ENCODE measurements at regions of chr10 and their contacts with region 1.

Region 1: GRCh38 chr10:21265621-21266020 is 259.9 kb downstream of the SKIDA1 start:
- DNase-seq: no peak
- ATAC-seq: no peak
- H3K4me3 ChIP-seq: no peak overlapping the region
- H3K27ac ChIP-seq: no peak overlapping the region
- H3K4me1 ChIP-seq: no peaks in the 10 kb centered on the region
- H3K27me3 ChIP-seq: no peaks in the 10 kb centered on the region
- CTCF ChIP-seq: no peak
- POLR2A ChIP-seq: no peak

Region 2: DNA sequence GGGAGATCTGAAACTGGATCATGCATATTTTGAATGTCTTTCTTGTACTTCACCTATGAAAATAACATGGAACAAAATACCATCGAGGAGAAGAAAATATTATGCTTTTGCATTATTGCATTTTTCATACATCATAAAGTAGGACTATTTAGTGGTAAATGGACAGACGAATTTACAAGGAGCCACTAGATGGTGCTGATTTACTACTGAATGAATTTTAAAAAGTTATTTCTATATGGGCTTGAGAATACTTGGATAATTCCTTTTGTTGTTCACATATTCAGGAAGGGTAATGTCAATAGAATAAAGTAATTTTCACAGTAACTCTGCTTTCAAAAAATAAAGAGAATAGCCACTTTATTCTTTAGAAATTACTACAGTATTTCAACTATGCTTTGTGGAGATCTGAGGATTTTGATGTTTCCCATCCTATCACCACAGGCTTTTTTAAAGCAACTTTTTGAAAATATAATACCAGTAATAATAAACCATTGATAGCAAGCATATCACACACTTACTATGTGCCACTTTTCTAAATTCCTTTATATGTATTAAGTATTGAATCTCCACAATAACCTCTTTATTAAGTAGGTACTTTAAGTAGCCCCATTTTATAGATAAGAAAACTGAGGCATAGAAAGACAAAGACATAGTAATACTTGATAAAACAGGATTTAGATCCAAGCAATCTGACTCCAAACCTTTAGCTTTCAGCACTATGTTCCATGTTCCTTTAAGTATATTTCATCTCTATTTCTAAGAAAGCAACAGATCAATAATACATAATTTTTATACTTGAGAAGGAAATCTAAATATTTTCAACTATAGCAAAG is 407.1 kb before region 1 on chr10:
- intact Hi-C with region 1: loop called (anchors 5 kb)
- DNase-seq: no peak
- ATAC-seq: no peak
- H3K4me3 ChIP-seq: no peak overlapping the region
- H3K27ac ChIP-seq: no peak overlapping the region
- H3K4me1 ChIP-seq: no peaks in the 10 kb centered on the region
- H3K27me3 ChIP-seq: no peaks in the 10 kb centered on the region
- CTCF ChIP-seq: peak; percentile 11 to 59 (median 45)
- POLR2A ChIP-seq: no peak

Region 3: GRCh38 chr10:21083871-21084295 is 181.7 kb before region 1 on chr10:
- intact Hi-C with region 1: loop called (anchors 5 kb)
- DNase-seq: no peak
- ATAC-seq: no peak
- H3K4me3 ChIP-seq: no peak overlapping the region
- H3K27ac ChIP-seq: no peak overlapping the region
- H3K4me1 ChIP-seq: no peaks in the 10 kb centered on the region
- H3K27me3 ChIP-seq: no peaks in the 10 kb centered on the region
- CTCF ChIP-seq: no peak
- POLR2A ChIP-seq: no peak

Region 4: GRCh38 chr10:21675157-21675796 is 409.7 kb after region 1 on chr10:
- intact Hi-C with region 1: no loop called
- DNase-seq: peak; percentile 22 to 39 (median 30)
- ATAC-seq: no peak
- H3K4me3 ChIP-seq: no peak overlapping the region
- H3K27ac ChIP-seq: no peak overlapping the region
- H3K4me1 ChIP-seq: peaks cover 5% of the 10 kb centered on the region
- H3K27me3 ChIP-seq: no peaks in the 10 kb centered on the region
- CTCF ChIP-seq: peak in 6 of 7 experiments; percentile 49 to 59 (median 54)
- POLR2A ChIP-seq: no peak

Measured in body of pancreas (tissue), 4 donors.